PC-3 (cell line): ENCODE measurements at regions of chr15 and their contacts with region 1.

Region 1: DNA sequence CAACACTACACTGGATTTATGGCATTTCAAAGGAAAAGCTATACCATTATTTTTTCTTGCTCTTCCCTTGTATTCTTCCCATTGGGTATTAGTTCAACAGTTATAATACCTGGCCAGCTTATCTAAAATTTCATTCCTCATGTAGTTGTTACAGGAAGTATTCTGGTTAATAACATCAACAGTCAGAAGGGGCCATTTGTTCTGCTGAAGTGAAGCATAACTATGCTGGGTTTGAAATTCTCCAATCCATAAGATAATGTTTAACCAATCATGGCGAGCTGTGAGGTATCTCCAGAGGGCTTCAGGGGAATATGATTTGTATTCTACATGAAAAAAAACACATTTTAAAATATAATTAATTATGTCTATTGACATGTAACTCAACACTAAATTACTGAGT is 43.4 kb downstream of the SPG11 start:
- DNase-seq: no peak
- ATAC-seq: no peak
- H3K4me3 ChIP-seq: no peak overlapping the region
- H3K27ac ChIP-seq: no peak overlapping the region
- H3K4me1 ChIP-seq: no peaks in the 10 kb centered on the region
- H3K27me3 ChIP-seq: no peaks in the 10 kb centered on the region
- CTCF ChIP-seq: no peak

Region 2: GRCh38 chr15:44573386-44573785 is 46.7 kb before region 1 on chr15:
- CTCF ChIA-PET with region 1: no interaction called
- POLR2A ChIA-PET with region 1: interaction called, 11 read pairs
- intact Hi-C with region 1: no loop called
- DNase-seq: no peak
- ATAC-seq: no peak
- H3K4me3 ChIP-seq: no peak overlapping the region
- H3K27ac ChIP-seq: no peak overlapping the region
- H3K4me1 ChIP-seq: no peaks in the 10 kb centered on the region
- H3K27me3 ChIP-seq: no peaks in the 10 kb centered on the region
- CTCF ChIP-seq: no peak

Region 3: DNA sequence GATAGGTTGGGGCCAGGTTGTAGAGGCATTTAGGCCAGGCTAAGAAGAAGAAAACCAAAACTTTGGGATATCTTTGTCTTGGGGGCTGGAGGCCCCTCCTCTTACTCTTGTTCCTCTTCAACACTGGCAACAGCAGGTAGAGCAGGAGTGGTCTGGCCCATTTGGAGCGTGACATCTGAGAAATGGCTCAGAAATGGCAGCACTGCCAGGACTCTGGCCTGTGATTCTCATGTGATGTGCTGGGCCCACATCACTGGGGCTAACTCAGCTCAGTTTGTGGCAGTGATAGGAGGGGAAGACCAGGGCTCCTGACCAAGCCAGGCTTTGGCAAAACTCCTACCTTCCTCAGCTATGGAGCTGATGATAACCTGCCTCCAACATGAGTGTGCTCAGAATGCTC is 72.6 kb after region 1 on chr15:
- CTCF ChIA-PET with region 1: no interaction called
- POLR2A ChIA-PET with region 1: no interaction called
- intact Hi-C with region 1: no loop called
- DNase-seq: no peak
- ATAC-seq: no peak
- H3K4me3 ChIP-seq: no peak overlapping the region
- H3K27ac ChIP-seq: no peak overlapping the region
- H3K4me1 ChIP-seq: no peaks in the 10 kb centered on the region
- H3K27me3 ChIP-seq: no peaks in the 10 kb centered on the region
- CTCF ChIP-seq: no peak